A549 (cell line): ENCODE measurements at regions of chr20 and their contacts with region 1.

Region 1: GRCh38 chr20:3563548-3564177 is 92.8 kb downstream of the ATRN start:
- DNase-seq: peak; percentile 37 to 70
- ATAC-seq: peak; percentile 85
- H3K4me3 ChIP-seq: no peak overlapping the region
- H3K27ac ChIP-seq: no peak overlapping the region
- H3K4me1 ChIP-seq: peaks cover 10% of the 10 kb centered on the region; the same call in 2 of the 3 replicates
- CTCF ChIP-seq: peak; percentile 93
- EP300 ChIP-seq: no peak
- POLR2A ChIP-seq: no peak
- RAD21 ChIP-seq: peak; percentile 81 to 86

Region 2: DNA sequence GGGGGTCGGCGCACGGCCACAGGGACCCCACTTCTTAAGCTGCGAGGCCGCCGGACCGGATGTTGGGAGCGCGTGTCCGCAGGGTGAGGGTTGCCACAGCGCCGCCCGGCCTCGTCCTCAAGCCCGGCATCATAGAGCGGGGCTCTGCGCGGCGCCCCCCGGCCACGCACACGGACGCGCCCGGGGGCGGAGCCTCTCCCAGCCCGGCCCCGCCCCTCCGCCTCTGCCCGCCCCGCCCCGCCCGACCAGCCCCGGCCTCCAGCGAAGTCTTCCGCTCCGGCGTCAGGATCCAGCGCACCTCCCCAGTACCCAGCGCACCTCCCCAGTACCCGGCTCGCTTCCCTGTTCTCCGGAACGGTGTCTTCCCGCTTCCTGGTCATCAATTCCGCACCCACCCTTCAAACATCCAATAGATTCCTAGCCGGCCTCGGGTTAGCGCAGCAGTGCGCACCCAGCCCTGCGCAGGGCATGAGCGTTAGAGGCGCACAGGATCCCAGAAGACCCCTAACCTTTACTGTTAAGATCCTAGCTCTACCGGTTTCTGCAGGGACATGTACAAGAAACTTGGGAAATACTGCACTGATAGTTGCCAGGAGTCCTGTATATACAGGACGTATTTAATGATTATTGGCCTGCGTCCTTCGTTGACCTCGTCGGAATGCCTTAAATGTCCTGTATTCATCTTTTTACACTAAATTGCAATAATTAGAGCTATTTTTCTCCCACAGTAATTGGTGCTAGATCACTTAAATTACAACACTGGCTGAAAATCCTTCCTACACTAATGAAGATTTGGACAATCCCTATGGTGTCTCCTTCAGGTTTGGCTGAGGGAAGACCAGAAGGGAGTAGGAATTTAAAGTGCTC is 155.7 kb before region 1 on chr20:
- CTCF ChIA-PET with region 1: interaction called, 14 read pairs
- POLR2A ChIA-PET with region 1: no interaction called
- DNase-seq: peak; percentile 88 to 92
- ATAC-seq: peak; percentile 83 to 86
- H3K4me3 ChIP-seq: peak overlapping the region; percentile 83
- H3K27ac ChIP-seq: peak overlapping the region; percentile 89 to 94
- H3K4me1 ChIP-seq: peaks cover 17% of the 10 kb centered on the region
- CTCF ChIP-seq: no peak
- EP300 ChIP-seq: no peak
- POLR2A ChIP-seq: peak; percentile 63
- RAD21 ChIP-seq: no peak

Region 3: GRCh38 chr20:3483784-3484183 is 79.9 kb before region 1 on chr20:
- CTCF ChIA-PET with region 1: no interaction called
- POLR2A ChIA-PET with region 1: no interaction called
- DNase-seq: no peak
- ATAC-seq: peak in 1 of 2 experiments; percentile 38; a peak in 3 of 6 replicates
- H3K4me3 ChIP-seq: no peak overlapping the region
- H3K27ac ChIP-seq: 0 out of 6 replicates have a peak overlapping the region, but pooled peaks of 1 of the 2 experiments have one; percentile 34
- H3K4me1 ChIP-seq: peaks cover 20% of the 10 kb centered on the region
- CTCF ChIP-seq: no peak
- EP300 ChIP-seq: no peak
- POLR2A ChIP-seq: no peak
- RAD21 ChIP-seq: no peak

Region 4: DNA sequence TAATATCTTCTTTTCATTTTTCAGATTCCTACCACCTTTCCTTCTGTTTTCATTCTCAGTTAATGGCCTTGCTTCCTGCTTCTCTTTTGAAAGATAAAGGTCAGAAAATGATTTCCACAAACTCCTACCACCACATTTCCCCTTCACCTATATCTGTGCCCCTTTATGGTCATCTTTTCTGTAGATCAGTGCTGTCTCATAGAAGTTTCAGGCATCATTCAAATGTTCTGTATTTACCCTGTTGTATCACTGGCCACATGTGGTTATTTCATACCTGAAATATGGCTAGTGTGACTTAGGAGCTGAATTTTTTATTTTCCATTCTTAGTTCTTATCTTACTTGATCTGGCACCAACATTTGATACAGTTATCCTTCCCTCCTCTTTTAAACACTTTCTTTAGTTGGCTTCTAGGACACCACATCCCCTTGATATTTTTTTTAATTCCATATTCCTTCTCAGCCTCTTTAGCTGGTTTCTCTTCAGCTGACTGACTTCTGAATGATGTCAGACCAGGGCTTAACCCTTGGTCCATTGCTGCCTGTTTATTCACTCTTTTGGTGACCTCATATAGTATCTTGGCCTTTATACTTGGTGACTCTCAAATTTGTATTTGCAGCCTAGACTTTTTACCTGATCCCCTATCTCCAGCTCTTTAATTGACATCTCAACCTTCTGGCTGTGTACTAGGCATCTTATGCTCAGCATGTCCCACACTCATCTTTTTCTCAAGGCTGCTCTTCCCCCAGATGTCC is 11.8 kb before region 1 on chr20:
- CTCF ChIA-PET with region 1: interaction called, 21 read pairs
- POLR2A ChIA-PET with region 1: no interaction called
- DNase-seq: no peak
- ATAC-seq: no peak
- H3K4me3 ChIP-seq: no peak overlapping the region
- H3K27ac ChIP-seq: no peak overlapping the region; a peak in 1 of 6 replicates
- H3K4me1 ChIP-seq: peaks cover 59% of the 10 kb centered on the region
- CTCF ChIP-seq: no peak
- EP300 ChIP-seq: no peak
- POLR2A ChIP-seq: no peak
- RAD21 ChIP-seq: no peak

Region 5: GRCh38 chr20:3580412-3580811 is 16.7 kb after region 1 on chr20:
- CTCF ChIA-PET with region 1: interaction called, 36 read pairs
- POLR2A ChIA-PET with region 1: no interaction called
- DNase-seq: no peak
- ATAC-seq: peak in 1 of 2 experiments; percentile 33; a peak in 1 of 6 replicates
- H3K4me3 ChIP-seq: no peak overlapping the region
- H3K27ac ChIP-seq: no peak overlapping the region
- H3K4me1 ChIP-seq: no peaks in the 10 kb centered on the region
- CTCF ChIP-seq: no peak
- EP300 ChIP-seq: no peak
- POLR2A ChIP-seq: no peak
- RAD21 ChIP-seq: 0 out of 5 replicates have a peak, but pooled peaks of 1 of the 2 experiments have one; percentile 5

Region 6: GRCh38 chr20:3670511-3670910 is 106.8 kb after region 1 on chr20:
- CTCF ChIA-PET with region 1: interaction called, 10 read pairs
- POLR2A ChIA-PET with region 1: no interaction called
- DNase-seq: no peak
- ATAC-seq: peak; percentile 4 to 27; a peak in 4 of 6 replicates
- H3K4me3 ChIP-seq: no peak overlapping the region
- H3K27ac ChIP-seq: no peak overlapping the region
- H3K4me1 ChIP-seq: peaks cover 21% of the 10 kb centered on the region
- CTCF ChIP-seq: no peak
- EP300 ChIP-seq: no peak
- POLR2A ChIP-seq: no peak
- RAD21 ChIP-seq: 0 out of 5 replicates have a peak, but pooled peaks of 1 of the 2 experiments have one; percentile 8

Region 7: GRCh38 chr20:3753098-3753980 is 189.7 kb after region 1 on chr20:
- CTCF ChIA-PET with region 1: interaction called, 11 read pairs
- POLR2A ChIA-PET with region 1: no interaction called
- DNase-seq: peak; percentile 85 to 89
- ATAC-seq: peak; percentile 28 to 62; a peak in 3 of 6 replicates
- H3K4me3 ChIP-seq: no peak overlapping the region
- H3K27ac ChIP-seq: no peak overlapping the region
- H3K4me1 ChIP-seq: peaks cover 7% of the 10 kb centered on the region; the same call in 2 of the 3 replicates
- CTCF ChIP-seq: peak; percentile 81
- EP300 ChIP-seq: no peak
- POLR2A ChIP-seq: no peak
- RAD21 ChIP-seq: peak; percentile 57 to 71